Mammary epithelial cell (primary cell): ENCODE measurements at regions of chr3 and their contacts with region 1.

Region 1: DNA sequence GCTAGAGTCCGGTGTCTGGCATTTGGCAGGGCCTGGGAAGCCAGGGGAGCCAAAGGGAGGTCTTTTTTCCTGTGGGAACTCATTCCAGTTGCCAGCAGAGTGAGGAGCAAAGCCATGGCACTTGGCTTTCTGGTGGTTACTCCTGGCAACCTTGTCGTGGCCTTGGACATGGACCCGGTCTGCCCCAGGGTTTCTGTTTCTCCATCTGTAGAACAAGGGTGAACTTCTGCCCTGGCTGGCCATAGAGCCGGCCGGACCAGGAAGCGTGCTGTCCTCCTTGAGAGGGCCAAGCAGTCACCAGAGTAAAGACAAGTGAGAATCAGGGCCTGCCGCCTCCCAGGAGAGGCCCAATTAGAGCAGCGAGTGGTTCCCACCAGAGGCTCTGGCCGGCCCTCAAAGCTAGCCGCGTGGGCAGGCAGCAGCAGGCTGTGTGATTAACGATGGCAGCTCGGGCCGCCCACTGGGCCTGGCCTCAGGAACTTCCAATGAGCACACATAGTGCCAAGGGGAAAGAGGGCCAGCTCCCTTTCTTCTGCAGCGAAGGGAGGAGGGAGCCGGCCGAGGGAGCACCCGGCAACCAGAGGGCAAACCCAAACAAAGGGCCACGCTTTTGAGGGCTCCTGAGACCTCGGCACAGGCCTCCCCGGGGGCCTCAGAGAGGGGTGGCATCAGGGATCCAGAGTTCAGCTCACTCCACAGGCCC is 29.1 kb upstream of the ELP6 start:
- DNase-seq: peak; percentile 26
- H3K4me3 ChIP-seq: no peak overlapping the region
- H3K27ac ChIP-seq: no peak overlapping the region
- H3K4me1 ChIP-seq: no peaks in the 10 kb centered on the region
- H3K27me3 ChIP-seq: peaks cover 2% of the 10 kb centered on the region
- CTCF ChIP-seq: no peak

Region 2: DNA sequence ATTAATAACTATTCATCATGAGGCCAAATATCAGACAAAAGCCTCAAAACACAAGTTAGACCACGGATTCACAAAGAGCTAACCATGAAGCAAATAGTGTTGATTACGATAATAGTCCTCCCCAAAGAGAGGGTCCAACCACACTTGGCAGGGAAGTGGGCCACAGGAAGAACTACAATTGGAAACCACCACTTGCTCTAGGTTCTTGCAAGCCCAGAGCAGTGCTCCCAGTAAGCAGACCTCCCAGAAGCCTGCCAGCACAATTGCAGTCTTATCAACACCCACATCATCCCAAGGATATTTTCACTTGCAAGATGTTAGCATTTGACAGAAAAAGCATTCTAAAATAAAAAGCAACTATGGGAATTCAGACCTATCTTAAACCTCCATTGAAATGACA is 390.0 kb before region 1 on chr3:
- CTCF ChIA-PET with region 1: no interaction called
- dilution Hi-C with region 1: no loop called
- in situ Hi-C with region 1: no loop called
- intact Hi-C with region 1: no loop called
- DNase-seq: no peak
- H3K4me3 ChIP-seq: no peak overlapping the region
- H3K27ac ChIP-seq: no peak overlapping the region
- H3K4me1 ChIP-seq: no peaks in the 10 kb centered on the region
- H3K27me3 ChIP-seq: no peaks in the 10 kb centered on the region
- CTCF ChIP-seq: no peak

Region 3: DNA sequence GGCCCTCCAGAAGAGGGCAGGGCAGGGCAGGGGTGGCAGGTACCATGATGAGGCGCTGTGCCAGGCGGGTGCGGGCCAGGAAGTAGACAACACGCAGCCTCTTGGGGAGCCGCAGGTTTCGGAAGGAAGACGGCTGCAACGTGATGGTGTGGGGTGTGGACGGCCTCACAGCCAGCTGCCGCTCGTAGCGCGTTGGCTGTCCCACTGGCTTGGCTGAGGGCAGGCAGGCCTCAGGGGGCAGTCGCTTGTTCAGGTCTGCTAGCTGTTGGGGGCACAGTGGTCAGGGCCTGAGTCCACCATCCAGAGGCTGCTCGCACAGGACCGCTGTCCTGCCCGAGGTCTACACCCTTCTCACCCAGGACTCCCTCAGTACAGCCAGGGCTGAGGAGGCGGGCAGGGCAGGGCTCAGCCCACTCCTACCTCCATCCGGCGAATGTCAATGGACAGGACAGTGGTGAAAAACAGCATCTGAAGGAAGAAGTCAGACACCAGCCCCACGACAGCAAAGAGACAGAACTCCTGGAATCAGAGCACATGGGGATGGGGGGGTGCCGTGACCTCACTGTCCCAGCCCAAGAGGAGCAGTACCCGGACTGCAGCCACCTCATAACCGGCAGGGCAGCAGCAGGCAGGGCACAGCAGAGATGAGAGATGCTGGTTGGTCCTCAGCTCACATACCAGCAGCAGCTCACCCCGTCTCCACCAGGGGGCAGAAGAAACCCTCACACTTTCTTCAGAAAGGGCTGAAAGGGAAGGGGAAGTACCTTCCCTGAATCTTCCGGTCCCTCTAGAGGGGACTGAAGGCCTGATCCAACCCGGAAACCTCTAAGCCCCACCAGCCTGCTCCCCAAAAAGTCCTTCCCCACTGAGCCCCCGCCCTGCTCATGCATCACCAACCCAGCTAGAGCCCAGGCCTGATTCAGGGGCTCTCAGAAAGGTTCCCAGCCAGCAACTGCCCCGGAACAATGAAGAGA is 121.8 kb before region 1 on chr3:
- CTCF ChIA-PET with region 1: no interaction called
- dilution Hi-C with region 1: no loop called
- in situ Hi-C with region 1: no loop called
- intact Hi-C with region 1: no loop called
- DNase-seq: peak; percentile 77
- H3K4me3 ChIP-seq: no peak overlapping the region
- H3K27ac ChIP-seq: no peak overlapping the region
- H3K4me1 ChIP-seq: no peaks in the 10 kb centered on the region
- H3K27me3 ChIP-seq: no peaks in the 10 kb centered on the region
- CTCF ChIP-seq: peak; percentile 94 to 96

Region 4: GRCh38 chr3:47583320-47584075 is 40.9 kb after region 1 on chr3:
- CTCF ChIA-PET with region 1: no interaction called
- dilution Hi-C with region 1: no loop called
- in situ Hi-C with region 1: no loop called
- intact Hi-C with region 1: loop called (anchors 5 kb)
- DNase-seq: peak; percentile 24
- H3K4me3 ChIP-seq: no peak overlapping the region
- H3K27ac ChIP-seq: no peak overlapping the region
- H3K4me1 ChIP-seq: peaks cover 9% of the 10 kb centered on the region
- H3K27me3 ChIP-seq: peaks cover 6% of the 10 kb centered on the region
- CTCF ChIP-seq: no peak

Region 5: DNA sequence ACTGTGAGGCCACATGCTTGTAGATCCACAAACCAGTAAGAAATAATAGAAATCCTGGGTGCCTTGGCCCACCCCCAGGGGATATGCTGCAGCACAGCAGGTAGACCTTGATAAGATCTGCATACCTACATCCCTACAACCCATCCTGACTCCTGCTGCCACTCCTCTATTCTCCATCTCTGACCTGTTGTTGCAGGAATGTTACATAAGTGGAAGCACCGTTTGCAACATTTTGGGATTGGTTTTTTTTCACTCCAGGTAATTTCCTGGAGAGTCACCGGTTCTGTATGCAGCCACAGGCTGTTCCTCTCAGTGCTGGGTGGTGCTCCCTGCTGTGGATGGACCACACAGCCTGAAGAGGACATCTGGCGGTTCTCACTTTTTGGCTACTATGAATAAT is 52.2 kb after region 1 on chr3:
- CTCF ChIA-PET with region 1: no interaction called
- dilution Hi-C with region 1: loop called (anchors 10 kb)
- in situ Hi-C with region 1: no loop called
- intact Hi-C with region 1: no loop called
- DNase-seq: peak; percentile 80
- H3K4me3 ChIP-seq: no peak overlapping the region
- H3K27ac ChIP-seq: no peak overlapping the region
- H3K4me1 ChIP-seq: peaks cover 5% of the 10 kb centered on the region
- H3K27me3 ChIP-seq: no peaks in the 10 kb centered on the region
- CTCF ChIP-seq: no peak